Mammary epithelial cell (primary cell): ENCODE measurements at regions of chr5 and their contacts with region 1.

Region 1: GRCh38 chr5:172454358-172455086 is at the start of gene SH3PXD2B:
- DNase-seq: peak; percentile 40
- H3K4me3 ChIP-seq: peak within 1 kb of the TSS; percentile 68 to 83 (median 76)
- H3K27ac ChIP-seq: peak within 1 kb of the TSS; percentile 62
- H3K4me1 ChIP-seq: peaks cover 21% of the 10 kb centered on the region
- H3K27me3 ChIP-seq: no peaks in the 10 kb centered on the region
- CTCF ChIP-seq: no peak
- total RNA-seq, gene SH3PXD2B: 19.2 to 25.1 TPM

Region 2: DNA sequence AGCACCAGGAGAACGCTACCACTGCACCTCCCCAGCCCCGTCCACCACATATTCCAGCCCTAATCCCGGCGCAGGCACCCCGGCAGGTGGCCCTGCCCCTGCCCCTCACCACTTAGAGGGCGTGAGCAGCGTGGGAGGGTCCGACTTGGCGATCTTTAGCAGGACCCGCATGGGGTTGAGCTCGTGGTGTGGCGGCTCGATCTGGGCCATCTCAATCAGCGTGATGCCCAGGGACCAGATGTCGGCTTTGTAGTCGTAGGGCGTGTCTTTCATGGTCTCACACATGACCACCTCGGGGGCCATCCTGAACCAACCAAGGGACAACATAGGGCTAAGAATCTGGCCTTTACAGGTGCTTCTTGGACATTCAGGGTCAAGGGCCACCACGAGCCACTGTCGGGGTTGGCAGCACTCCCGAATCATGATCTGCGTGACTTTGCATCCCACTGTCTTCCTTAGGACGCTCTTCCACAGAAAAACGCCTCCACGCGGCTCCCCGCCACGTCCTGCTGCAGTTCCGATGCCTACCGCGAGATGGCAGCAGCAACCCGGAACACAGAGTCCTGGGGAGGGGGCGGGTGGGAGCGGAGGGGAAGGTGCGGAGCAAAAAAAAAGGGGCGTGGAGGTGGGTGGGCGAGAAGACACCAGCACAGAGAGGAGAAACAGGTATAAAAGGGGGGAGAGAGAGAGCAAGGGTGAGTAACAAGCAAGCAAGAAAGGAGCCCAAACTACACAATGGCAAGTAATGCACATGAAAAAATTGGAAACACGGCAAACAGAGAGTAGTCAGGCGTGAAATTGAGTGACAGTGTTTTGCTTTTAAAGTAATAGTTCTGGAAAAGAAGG is 347.8 kb before region 1 on chr5:
- CTCF ChIA-PET with region 1: no interaction called
- dilution Hi-C with region 1: no loop called
- in situ Hi-C with region 1: no loop called
- intact Hi-C with region 1: loop called (anchors 5 kb)
- DNase-seq: no peak
- H3K4me3 ChIP-seq: no peak overlapping the region
- H3K27ac ChIP-seq: peak overlapping the region; percentile 29
- H3K4me1 ChIP-seq: peaks cover 75% of the 10 kb centered on the region
- H3K27me3 ChIP-seq: no peaks in the 10 kb centered on the region
- CTCF ChIP-seq: peak; percentile 63 to 96

Region 3: DNA sequence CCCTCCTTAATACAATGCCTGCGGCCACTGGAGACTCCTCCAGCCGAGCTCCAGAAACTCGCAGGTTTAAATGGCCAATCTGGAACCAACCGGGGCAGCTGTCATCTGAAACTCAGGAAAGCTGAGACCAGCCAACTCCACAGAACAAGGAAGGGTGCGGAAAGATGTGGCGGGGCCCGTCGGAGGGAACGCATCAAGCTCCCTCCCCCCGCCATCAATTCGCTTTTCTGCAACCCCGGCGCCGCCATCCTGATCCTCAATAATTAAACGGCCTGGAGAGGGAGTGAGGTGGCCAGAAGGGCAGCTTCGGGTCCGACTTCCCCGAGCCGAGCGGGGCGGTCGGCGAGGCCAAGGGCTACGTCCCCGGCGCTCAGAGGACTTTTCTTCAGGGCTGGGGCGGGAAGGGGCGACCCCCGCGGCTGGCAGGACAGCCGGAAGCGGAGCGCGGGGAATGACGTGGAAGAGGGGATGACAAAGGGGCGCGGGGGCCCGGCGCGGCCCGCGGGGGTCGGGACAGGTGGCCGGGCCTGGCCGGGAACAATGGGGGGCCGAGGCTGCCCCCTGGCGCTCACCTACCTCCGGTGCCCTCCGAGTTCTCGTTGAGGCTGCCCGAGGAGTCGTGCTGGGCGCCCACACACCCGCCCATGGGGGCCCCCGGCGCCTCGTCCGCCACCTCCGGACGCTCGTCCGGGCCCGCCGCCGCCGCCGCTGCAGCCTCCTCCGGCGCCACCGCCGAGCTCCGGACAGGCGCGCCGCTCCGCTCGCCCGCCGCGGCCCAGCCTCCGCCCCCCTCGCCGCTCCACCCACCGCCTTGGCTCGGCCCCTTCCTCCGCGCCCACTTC is 171.3 kb before region 1 on chr5 and contains the start of gene UBTD2:
- CTCF ChIA-PET with region 1: no interaction called
- dilution Hi-C with region 1: no loop called
- in situ Hi-C with region 1: no loop called
- intact Hi-C with region 1: loop called (anchors 5 kb)
- DNase-seq: peak; percentile 77
- H3K4me3 ChIP-seq: peak within 1 kb of the TSS; percentile 89 to 97 (median 90)
- H3K27ac ChIP-seq: peak within 1 kb of the TSS; percentile 72
- H3K4me1 ChIP-seq: peaks cover 10% of the 10 kb centered on the region
- H3K27me3 ChIP-seq: no peaks in the 10 kb centered on the region
- CTCF ChIP-seq: peak; percentile 11 to 57
- total RNA-seq, gene UBTD2: 15.5 to 17.8 TPM

Region 4: GRCh38 chr5:172315587-172316493 is 138.7 kb before region 1 on chr5:
- CTCF ChIA-PET with region 1: no interaction called
- dilution Hi-C with region 1: no loop called
- in situ Hi-C with region 1: no loop called
- intact Hi-C with region 1: loop called (anchors 5 kb)
- DNase-seq: no peak
- H3K4me3 ChIP-seq: no peak overlapping the region
- H3K27ac ChIP-seq: peak overlapping the region; percentile 90
- H3K4me1 ChIP-seq: peaks cover 26% of the 10 kb centered on the region
- H3K27me3 ChIP-seq: no peaks in the 10 kb centered on the region
- CTCF ChIP-seq: no peak

Region 5: GRCh38 chr5:172361566-172362238 is 92.8 kb before region 1 on chr5:
- CTCF ChIA-PET with region 1: no interaction called
- dilution Hi-C with region 1: no loop called
- in situ Hi-C with region 1: no loop called
- intact Hi-C with region 1: loop called (anchors 5 kb)
- DNase-seq: peak; percentile 99
- H3K4me3 ChIP-seq: no peak overlapping the region
- H3K27ac ChIP-seq: peak overlapping the region; percentile 83
- H3K4me1 ChIP-seq: peaks cover 12% of the 10 kb centered on the region
- H3K27me3 ChIP-seq: no peaks in the 10 kb centered on the region
- CTCF ChIP-seq: no peak

Region 6: DNA sequence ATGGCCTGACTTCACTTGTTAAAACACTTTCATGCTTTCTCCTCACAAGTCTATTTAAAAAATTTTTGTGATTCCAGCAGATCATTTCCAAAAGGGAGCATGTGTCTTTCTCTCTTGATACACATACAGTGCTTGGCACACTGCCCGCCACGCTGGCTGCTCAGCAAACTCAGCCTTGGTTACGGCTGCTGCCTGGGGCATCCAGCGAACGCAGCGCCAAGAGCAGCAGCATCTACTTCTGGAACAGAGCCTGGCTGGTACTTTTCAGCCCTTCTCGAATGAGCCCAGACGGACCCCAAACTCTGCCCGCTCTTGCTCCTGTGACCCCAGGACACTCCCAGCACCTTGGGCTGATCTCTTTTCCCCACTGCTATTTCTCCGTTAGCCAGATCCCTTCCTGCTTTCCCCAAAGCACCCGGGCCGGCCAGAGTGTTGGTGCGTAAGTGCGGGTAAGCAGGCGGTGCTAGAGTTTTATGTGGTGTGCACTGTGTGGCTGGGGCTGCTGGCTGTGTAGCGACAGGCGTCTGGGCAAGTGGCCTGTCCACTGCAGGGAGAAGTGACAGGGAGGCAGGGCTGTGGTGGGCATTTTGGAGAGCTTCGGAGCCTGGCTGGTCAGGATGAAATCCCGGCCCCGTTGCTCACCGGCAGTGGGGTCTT is 73.4 kb before region 1 on chr5:
- CTCF ChIA-PET with region 1: no interaction called
- dilution Hi-C with region 1: no loop called
- in situ Hi-C with region 1: no loop called
- intact Hi-C with region 1: loop called (anchors 5 kb)
- DNase-seq: no peak
- H3K4me3 ChIP-seq: no peak overlapping the region
- H3K27ac ChIP-seq: no peak overlapping the region
- H3K4me1 ChIP-seq: peaks cover 14% of the 10 kb centered on the region
- H3K27me3 ChIP-seq: no peaks in the 10 kb centered on the region
- CTCF ChIP-seq: no peak

Region 7: DNA sequence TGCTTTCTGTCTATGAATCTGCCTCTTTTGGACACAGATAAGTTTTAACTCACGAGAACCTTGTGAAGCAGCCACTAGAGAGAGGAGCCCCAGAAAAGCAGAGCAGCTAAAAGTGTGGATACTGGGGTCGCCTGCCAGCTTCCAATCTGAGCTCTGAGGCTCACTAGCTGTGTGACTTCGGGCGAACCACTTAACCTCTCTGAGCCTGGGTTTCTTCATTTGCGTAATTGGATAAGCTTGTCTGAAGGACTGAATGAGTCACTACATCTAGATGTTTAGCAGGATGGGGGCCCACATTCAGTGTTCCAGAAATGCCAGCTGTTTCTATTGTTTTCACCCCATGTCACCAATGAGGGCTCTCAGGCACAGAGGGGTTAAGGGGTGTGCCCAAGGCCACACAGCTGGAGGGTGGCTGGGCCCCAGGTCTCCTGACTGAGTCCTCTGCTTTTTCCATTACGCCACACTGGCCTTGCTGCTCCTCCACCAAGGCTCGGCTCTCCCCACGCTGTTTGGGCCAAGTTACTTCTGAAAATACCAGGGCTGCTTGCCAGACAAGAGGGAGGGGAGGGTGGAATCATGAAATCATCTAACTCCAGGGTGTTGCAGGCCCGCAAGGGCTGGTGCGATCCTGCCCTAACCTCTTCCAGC is 36.4 kb before region 1 on chr5:
- CTCF ChIA-PET with region 1: interaction called, 3 read pairs
- dilution Hi-C with region 1: no loop called
- in situ Hi-C with region 1: no loop called
- intact Hi-C with region 1: loop called (anchors 1 kb)
- DNase-seq: peak; percentile 85
- H3K4me3 ChIP-seq: no peak overlapping the region
- H3K27ac ChIP-seq: peak overlapping the region; percentile 25
- H3K4me1 ChIP-seq: peaks cover 43% of the 10 kb centered on the region
- H3K27me3 ChIP-seq: no peaks in the 10 kb centered on the region
- CTCF ChIP-seq: no peak